ENCODE measurements at regions of chr16 and their contacts with region 1.

Region 1: DNA sequence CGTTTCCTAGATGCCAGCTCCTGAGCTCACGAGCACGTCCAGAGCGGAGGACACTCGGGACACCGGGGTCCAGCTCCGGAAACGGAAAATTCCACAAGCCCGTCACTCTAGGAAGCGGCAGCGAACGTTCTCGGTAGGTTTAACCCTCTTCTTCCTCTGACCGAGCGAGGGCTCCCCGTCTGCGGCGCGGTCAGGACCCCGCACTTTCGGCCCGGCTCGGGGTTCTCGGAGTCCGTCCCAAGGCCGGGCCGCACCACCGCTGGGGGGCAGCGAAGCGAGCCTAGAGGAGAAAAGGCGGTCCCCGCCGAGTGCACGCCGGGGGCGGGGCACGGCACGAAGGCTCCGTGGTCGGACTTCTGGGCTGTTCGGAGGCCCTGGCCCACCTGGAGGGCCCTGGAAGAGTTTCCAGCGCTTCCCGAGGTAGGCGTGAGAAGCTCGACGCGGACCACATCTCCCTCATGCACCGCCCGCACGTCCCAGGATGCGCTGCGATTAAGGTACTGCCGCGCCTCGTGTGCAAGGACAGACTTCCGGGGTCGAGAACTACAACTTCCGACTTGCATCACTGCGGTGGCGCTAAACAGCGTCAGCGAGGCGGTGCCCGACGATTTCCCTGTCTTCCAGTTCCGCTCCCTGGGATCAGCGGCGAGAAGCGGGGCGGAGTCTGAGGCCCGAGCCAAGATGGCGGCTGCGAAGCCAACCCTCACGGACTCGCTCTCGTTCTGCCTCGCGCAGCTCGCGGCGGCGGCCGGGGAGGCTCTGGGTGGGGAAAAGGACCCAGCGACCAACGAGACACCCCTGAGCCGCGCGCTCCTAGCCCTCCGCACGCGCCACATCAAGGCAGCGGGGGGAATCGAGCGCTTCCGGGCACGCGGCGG is at the start of gene ARMC5:
- DNase-seq: peak; percentile 90 to 99 (median 96)
- ATAC-seq: peak; percentile 71 to 76
- H3K4me3 Mint-ChIP-seq: peak within 1 kb of the TSS; percentile 90 to 97 (median 93)
- H3K27ac Mint-ChIP-seq: peak within 1 kb of the TSS; percentile 92 to 100 (median 98)
- H3K4me1 Mint-ChIP-seq: peaks cover 16 to 54% (median 42%) of the 10 kb centered on the region in 4 donors
- H3K27me3 Mint-ChIP-seq: no peaks in the 10 kb centered on the region
- polyA plus RNA-seq, gene ARMC5: 6.2 to 9.8 (median 8.0) TPM

Region 2: DNA sequence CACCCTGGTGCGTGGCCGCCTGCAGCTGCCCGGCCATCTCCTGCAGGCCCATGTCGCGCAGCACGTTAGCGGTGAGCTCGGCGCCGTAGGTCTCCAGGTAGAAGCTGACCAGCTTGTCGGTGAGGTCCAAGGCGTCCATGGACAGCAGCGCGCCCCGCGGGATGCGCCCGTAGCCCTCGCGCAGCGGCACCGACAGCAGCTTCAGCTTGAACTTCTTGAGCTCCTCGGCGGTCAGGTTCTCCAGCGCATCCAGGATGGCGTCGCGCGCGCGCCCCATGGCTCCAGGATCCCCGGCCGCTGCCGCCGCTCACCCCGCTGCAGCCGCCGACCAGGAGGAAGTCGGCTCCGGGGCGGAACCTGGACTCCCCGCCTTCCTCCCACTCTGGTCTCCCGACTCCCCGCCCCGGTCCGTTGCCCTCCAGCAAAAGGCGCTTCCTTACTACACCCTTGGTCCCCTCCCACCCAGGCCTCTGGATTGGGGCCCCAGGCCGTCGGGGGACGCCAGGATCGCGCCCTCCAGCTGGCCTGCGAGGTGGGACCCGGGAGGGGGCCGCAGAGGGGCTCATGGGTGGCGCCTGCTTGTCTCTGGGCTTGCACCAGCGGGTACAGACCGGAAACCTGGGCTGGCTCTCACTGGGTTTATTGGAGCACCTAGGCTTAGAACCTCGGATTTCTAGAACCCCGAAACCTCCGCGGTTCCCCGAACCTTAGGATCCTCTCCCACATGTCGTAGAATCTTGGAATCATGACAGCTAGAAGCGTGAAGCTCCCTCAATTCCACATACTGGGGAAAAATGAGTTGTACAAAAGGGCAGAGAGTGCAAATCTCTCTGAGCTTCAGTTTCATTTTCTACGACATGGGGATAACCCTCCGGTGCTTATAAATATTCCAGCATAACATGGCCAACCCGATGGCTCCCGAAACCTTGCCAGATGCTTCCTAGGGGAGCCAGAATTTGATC is 256.4 kb before region 1 on chr16 and contains the start of gene PYCARD:
- POLR2A ChIA-PET with region 1: interaction called, 15 read pairs
- DNase-seq: peak in 4 of 10 donors; percentile 18 to 55 (median 40)
- ATAC-seq: peak; percentile 41 to 45
- H3K4me3 Mint-ChIP-seq: peak within 1 kb of the TSS; percentile 85 to 93 (median 89)
- H3K27ac Mint-ChIP-seq: peak within 1 kb of the TSS; percentile 80 to 91 (median 88)
- H3K4me1 Mint-ChIP-seq: peaks cover 30 to 56% (median 54%) of the 10 kb centered on the region in 4 donors
- H3K27me3 Mint-ChIP-seq: no peaks in the 10 kb centered on the region
- polyA plus RNA-seq, gene PYCARD: 39.3 to 65.2 (median 39.7) TPM

Region 3: GRCh38 chr16:31487720-31488467 is 28.8 kb after region 1 on chr16:
- POLR2A ChIA-PET with region 1: interaction called, 15 read pairs
- DNase-seq: peak; percentile 53 to 88 (median 76)
- ATAC-seq: peak; percentile 88 to 90
- H3K4me3 Mint-ChIP-seq: peak overlapping the region; percentile 88 to 95 (median 92)
- H3K27ac Mint-ChIP-seq: peak overlapping the region; percentile 46 to 90 (median 86)
- H3K4me1 Mint-ChIP-seq: peaks cover 2 to 24% (median 18%) of the 10 kb centered on the region in 4 donors
- H3K27me3 Mint-ChIP-seq: no peaks in the 10 kb centered on the region

Region 4: DNA sequence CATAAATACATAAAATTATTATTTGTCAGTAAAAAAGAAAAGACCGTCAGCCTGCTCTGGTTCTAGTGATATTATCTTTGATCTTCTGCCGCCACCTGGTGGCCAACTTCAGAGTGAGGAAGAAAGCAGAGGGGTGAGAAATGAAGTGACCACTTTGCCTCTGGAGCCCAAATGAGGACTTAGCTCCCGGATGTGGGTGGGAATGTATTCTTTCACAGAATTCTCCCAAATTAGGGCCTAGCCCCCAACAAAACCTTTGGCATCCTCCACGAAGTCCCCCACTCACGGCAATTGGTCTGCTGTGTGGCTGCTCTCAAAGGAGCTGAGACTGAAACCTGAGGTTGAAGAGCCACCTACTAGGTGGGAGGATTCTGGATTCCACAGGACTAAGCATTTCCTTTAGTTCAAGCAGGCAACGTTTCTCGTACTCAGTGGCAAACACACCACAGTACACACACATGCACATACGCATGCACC is 409.6 kb after region 1 on chr16:
- POLR2A ChIA-PET with region 1: interaction called, 25 read pairs
- DNase-seq: peak; percentile 61 to 88 (median 77)
- ATAC-seq: peak; percentile 26 to 40
- H3K4me3 Mint-ChIP-seq: peak overlapping the region; percentile 64 to 87 (median 71)
- H3K27ac Mint-ChIP-seq: peak overlapping the region; percentile 59 to 96 (median 88)
- H3K4me1 Mint-ChIP-seq: peaks cover 11 to 58% (median 38%) of the 10 kb centered on the region in 4 donors
- H3K27me3 Mint-ChIP-seq: no peaks in the 10 kb centered on the region

Measured in naive thymus-derived CD8-positive, alpha-beta T cell (primary cell).